Tibial artery (tissue), 4 donors: ENCODE measurements at regions of chr22 and their contacts with region 1.

Region 1: GRCh38 chr22:30005213-30005857 is 74.9 kb upstream of the HORMAD2 start:
- DNase-seq: peak; percentile 81 to 86
- H3K4me3 ChIP-seq: no peak overlapping the region
- H3K27ac ChIP-seq: no peak overlapping the region
- H3K4me1 ChIP-seq: no peaks in the 10 kb centered on the region
- H3K27me3 ChIP-seq: no peaks in the 10 kb centered on the region
- CTCF ChIP-seq: peak; percentile 80 to 96

Region 2: DNA sequence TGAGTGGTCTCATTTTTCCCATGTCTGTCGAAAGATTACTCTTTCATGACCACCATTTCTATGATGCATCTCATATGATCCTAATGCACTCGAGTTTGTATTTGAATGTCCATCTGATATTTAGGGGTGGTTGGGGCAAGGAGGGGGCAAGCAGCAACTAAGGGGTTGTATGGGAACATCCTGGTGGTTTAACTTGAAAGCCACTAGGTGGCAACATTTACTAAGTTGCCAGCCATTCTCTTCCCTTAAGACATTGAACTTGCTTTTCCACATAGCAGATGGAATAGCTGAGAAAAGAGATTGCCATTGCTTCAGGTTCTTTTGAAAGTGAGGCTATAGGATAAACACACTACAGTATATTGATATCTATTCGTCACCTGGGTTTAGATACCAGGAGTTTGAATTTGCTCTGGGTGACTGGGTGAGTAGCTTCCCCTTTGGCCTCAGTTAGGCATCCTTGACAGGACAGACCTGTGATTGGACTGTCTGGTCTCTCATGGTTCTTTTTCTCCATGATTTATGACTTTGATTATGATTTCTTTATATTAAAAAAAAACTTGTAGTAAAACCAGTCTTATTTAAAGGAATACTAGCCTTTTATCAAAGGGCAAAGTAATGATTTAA is 369.5 kb before region 1 on chr22:
- intact Hi-C with region 1: loop called (anchors 10 kb)
- DNase-seq: no peak
- H3K4me3 ChIP-seq: no peak overlapping the region
- H3K27ac ChIP-seq: no peak overlapping the region
- H3K4me1 ChIP-seq: no peaks in the 10 kb centered on the region
- H3K27me3 ChIP-seq: no peaks in the 10 kb centered on the region
- CTCF ChIP-seq: peak; percentile 44 to 54

Region 3: DNA sequence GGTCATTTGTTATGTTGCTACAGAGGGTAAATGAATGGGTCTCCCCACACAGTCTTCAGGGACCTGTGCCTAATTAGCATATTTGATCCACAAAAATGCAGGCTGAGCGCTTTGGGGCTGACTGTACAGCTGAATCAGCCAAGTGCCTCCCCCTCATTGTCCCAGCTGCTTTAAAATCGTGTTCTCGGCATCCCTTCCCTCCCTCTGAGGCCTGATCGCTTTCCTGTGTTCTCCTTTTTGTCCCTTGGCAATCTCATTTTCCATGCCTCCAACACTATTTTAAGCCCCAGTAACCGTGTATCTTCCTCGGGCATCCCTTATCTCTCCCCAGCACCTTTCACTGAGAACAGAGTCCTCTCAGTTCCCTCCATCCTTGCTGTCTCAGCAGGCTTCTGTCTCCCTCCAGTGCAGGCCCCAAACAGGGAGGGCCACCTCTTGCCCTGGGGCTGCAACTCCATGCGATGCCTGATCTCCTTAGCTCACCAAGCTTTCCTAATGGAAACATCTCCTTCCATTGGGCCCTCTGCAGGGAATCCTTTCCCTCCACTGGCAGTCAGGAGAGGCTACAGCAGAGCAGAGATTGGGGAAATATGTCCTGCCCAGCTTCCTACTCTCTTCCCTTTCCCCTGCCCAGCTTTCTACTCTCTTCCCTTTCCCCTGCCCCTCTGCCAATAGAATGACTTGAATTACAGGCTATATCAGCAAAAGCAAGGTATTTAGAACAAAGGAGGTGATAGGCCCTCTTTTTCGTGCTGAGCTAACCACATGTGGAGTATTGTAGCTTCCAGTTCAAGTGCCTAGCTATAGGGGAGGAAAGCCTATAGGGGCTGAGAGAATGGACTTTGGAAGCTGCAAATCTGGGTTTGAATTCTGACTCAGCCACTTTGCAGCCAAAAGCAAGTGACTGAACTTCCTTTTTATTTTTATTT is 224.3 kb before region 1 on chr22:
- intact Hi-C with region 1: loop called (anchors 10 kb)
- DNase-seq: no peak
- H3K4me3 ChIP-seq: no peak overlapping the region
- H3K27ac ChIP-seq: peak overlapping the region; percentile 41 to 48
- H3K4me1 ChIP-seq: peaks cover 0 to 28% (median 15%) of the 10 kb centered on the region in 4 donors
- H3K27me3 ChIP-seq: no peaks in the 10 kb centered on the region
- CTCF ChIP-seq: no peak

Region 4: GRCh38 chr22:29837780-29838598 is 167.3 kb before region 1 on chr22 and contains the start of gene ASCC2:
- intact Hi-C with region 1: loop called (anchors 10 kb)
- DNase-seq: peak; percentile 99
- H3K4me3 ChIP-seq: peak within 1 kb of the TSS; percentile 89 to 99
- H3K27ac ChIP-seq: peak within 1 kb of the TSS; percentile 66 to 83
- H3K4me1 ChIP-seq: peaks cover 0 to 22% (median 11%) of the 10 kb centered on the region in 4 donors
- H3K27me3 ChIP-seq: no peaks in the 10 kb centered on the region
- CTCF ChIP-seq: peak; percentile 25 to 28

Region 5: DNA sequence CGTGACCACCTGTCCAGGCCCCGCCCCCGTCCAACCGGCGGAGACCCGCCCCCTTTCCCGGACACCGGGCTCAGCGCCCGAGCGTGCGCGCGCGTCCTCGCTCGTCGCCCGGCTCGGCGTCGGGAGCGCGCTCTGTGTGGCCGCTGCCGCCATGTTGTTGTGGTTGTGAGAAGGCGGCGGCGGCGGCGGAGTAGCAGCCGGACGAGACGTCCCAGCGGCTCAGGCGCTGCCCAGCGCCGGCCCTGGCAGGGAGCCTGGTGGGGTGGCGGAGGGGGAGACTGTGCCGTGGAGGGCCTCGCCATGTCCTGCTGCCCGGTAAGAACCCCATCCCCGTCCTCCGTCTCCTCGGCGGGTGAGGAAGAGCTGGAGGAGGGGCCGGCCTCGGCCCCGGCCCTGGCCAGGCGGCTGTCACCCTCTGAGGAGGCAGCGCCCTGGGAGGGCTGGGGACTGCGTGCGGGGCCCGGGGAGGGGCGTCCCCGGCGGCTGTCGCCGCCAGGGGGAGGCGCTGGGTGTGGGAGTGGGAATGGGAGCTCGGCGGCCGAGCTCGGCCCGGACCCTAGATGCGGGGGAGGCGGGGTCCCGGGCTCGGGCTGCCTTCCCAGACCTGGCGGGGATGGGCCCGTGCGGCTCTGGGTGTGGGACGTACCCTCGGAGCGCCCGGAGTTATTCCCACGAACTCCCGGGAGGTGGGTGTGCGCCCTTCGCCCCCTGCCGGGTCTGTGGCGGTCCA is 122.1 kb before region 1 on chr22 and contains the start of gene MTMR3:
- intact Hi-C with region 1: loop called (anchors 10 kb)
- DNase-seq: peak; percentile 92 to 95
- H3K4me3 ChIP-seq: peak within 1 kb of the TSS; percentile 65 to 96
- H3K27ac ChIP-seq: peak within 1 kb of the TSS; percentile 87 to 97
- H3K4me1 ChIP-seq: peaks cover 0 to 44% (median 19%) of the 10 kb centered on the region in 4 donors
- H3K27me3 ChIP-seq: no peaks in the 10 kb centered on the region
- CTCF ChIP-seq: peak; percentile 43 to 48